HCT116 (cell line): ENCODE measurements at regions of chr12 and their contacts with region 1.

Region 1: DNA sequence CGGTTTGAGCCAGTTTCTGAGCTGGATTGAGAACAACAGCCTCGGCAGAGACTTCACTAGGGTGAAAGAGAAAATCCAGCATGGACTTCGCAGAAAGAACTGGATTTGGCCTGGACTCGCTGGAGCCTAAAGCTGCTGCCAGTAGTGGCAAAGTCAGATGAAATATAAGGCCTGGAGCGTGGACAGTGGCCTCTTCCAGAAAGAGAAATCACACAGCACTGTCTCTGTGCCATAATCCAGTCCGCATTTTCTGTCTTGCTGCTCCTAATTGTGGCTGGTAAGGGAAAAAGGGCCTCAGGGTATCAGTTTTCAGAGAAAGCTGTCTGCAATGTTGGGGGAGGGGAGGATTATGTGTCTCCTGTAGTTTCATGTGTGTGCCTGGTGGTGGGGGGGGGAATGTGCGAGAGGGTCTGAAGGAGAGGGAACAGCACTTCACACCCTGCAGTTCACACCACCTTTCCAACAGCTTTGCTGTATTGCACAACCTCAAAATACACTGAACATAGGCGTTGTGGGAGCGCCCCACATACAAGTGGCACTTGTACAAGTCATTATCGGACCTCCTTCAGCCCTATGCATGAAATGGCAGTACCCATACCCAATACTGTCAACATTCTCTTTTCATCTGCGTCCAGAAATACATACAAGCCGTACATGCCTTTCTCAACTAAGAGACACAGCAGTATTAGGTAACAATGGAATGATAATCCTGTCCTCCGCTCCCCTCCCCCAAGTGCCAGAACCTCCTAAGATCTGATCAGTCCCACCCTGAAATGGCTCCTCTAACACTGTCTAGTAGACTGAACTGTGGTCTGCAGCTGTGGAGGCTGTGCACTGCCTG is 107.5 kb upstream of the ATF7IP start:
- DNase-seq: peak; percentile 97
- ATAC-seq: peak; percentile 78
- H3K4me3 ChIP-seq: peak overlapping the region in 1 of 2 experiments; percentile 37; a peak in 2 of 4 replicates
- H3K27ac ChIP-seq: peak overlapping the region; percentile 82
- H3K4me1 ChIP-seq: peaks cover 44 to 58% of the 10 kb centered on the region in 2 experiments
- H3K27me3 ChIP-seq: no peaks in the 10 kb centered on the region
- CTCF ChIP-seq: no peak
- POLR2A ChIP-seq: peak; percentile 33
- RAD21 ChIP-seq: peak; percentile 44

Region 2: DNA sequence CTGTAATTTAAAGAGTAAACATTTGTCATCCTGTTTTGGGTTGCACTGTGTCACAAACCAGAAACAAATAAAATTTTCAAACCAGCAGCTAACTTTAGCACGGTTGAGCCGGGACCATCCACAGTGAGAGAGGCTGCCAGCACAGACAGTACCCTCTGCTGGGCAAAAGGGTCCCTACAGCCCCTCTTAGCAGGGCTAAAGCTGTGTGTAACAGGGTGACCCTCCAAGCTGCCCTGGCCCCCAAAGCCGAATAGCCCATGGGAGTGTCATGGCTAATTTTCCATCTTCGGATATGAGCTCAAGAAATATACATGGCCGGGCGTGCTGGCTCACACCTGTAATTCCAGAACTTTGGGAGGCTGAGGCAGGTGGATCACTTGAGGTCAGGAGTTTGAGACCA is 119.5 kb before region 1 on chr12:
- CTCF ChIA-PET with region 1: no interaction called
- POLR2A ChIA-PET with region 1: no interaction called
- RAD21 ChIA-PET with region 1: no interaction called
- intact Hi-C with region 1: no loop called
- DNase-seq: no peak
- ATAC-seq: peak; percentile 72
- H3K4me3 ChIP-seq: no peak overlapping the region
- H3K27ac ChIP-seq: no peak overlapping the region
- H3K4me1 ChIP-seq: no peaks in the 10 kb centered on the region
- H3K27me3 ChIP-seq: no peaks in the 10 kb centered on the region
- CTCF ChIP-seq: peak in 2 of 3 experiments; percentile 41 to 52; a peak in 4 of 6 replicates
- POLR2A ChIP-seq: no peak
- RAD21 ChIP-seq: peak; percentile 33

Region 3: GRCh38 chr12:14365294-14366208 is 107.6 kb after region 1 on chr12 and contains the start of gene ATF7IP:
- CTCF ChIA-PET with region 1: interaction called, 6 read pairs
- POLR2A ChIA-PET with region 1: interaction called, 17 read pairs
- RAD21 ChIA-PET with region 1: no interaction called
- intact Hi-C with region 1: loop called (anchors 1 kb)
- DNase-seq: peak; percentile 90
- ATAC-seq: peak; percentile 96
- H3K4me3 ChIP-seq: peak within 1 kb of the TSS; percentile 50 to 51
- H3K27ac ChIP-seq: peak within 1 kb of the TSS; percentile 99
- H3K4me1 ChIP-seq: peaks cover 2 to 25% of the 10 kb centered on the region in 2 experiments; a peak in 3 of 4 replicates
- H3K27me3 ChIP-seq: no peaks in the 10 kb centered on the region
- CTCF ChIP-seq: peak; percentile 15 to 41 (median 36); a peak in 3 of 6 replicates
- POLR2A ChIP-seq: no peak
- RAD21 ChIP-seq: peak; percentile 35
- total RNA-seq, gene ATF7IP: 38.6 TPM

Region 4: DNA sequence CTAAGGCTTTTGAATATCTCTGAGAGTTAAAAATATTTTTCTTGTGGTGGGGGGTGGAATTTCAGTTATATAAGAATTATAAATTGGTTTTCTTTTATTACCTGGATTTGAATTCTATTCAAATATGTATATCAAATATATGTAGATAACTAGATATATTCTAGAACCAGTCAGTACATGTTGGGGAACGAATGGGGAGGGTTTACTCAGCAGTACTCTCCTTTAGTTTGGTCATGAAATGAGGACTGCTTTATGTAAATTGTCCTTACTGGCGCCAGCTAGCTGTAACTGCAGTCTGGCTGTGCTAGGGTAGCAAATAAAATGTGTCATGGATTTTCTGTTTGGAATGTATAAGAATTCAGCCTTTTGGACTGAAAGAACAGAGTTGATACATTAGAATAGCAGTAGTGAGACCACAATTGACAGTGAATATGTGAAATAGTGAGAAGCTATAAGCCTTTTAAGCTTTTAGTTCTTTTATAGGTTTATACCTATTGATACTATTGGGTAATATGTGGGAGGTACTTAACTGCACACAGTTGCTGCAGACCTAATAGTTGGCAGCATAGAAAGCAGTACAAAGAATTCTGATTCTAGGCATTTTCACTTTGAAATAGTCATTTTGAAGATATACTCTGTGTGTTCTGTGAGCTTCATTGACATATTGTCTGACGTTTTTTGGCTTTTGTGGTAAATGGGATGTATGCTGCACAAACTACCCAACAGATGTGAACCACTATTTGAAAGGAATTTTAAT is 136.5 kb after region 1 on chr12:
- CTCF ChIA-PET with region 1: no interaction called
- POLR2A ChIA-PET with region 1: interaction called, 7 read pairs
- RAD21 ChIA-PET with region 1: no interaction called
- intact Hi-C with region 1: loop called (anchors 1 kb)
- DNase-seq: peak; percentile 79
- ATAC-seq: peak; percentile 96
- H3K4me3 ChIP-seq: peak overlapping the region; percentile 8 to 15; a peak in 2 of 4 replicates
- H3K27ac ChIP-seq: peak overlapping the region; percentile 61
- H3K4me1 ChIP-seq: peaks cover 24 to 34% of the 10 kb centered on the region in 2 experiments
- H3K27me3 ChIP-seq: no peaks in the 10 kb centered on the region
- CTCF ChIP-seq: 0 out of 6 replicates have a peak, but pooled peaks of 1 of the 3 experiments have one; percentile 3
- POLR2A ChIP-seq: no peak
- RAD21 ChIP-seq: no peak

Region 5: GRCh38 chr12:14417715-14418114 is 159.8 kb after region 1 on chr12:
- CTCF ChIA-PET with region 1: no interaction called
- POLR2A ChIA-PET with region 1: no interaction called
- RAD21 ChIA-PET with region 1: no interaction called
- intact Hi-C with region 1: loop called (anchors 1 kb)
- DNase-seq: no peak
- ATAC-seq: peak; percentile 49; the same call in 1 of the 2 replicates
- H3K4me3 ChIP-seq: no peak overlapping the region
- H3K27ac ChIP-seq: no peak overlapping the region
- H3K4me1 ChIP-seq: peaks cover 0 to 19% of the 10 kb centered on the region in 2 experiments; a peak in 2 of 4 replicates
- H3K27me3 ChIP-seq: no peaks in the 10 kb centered on the region
- CTCF ChIP-seq: no peak
- POLR2A ChIP-seq: no peak
- RAD21 ChIP-seq: no peak